Transverse colon (tissue), 4 donors: ENCODE measurements at regions of chr9 and their contacts with region 1.

Region 1: DNA sequence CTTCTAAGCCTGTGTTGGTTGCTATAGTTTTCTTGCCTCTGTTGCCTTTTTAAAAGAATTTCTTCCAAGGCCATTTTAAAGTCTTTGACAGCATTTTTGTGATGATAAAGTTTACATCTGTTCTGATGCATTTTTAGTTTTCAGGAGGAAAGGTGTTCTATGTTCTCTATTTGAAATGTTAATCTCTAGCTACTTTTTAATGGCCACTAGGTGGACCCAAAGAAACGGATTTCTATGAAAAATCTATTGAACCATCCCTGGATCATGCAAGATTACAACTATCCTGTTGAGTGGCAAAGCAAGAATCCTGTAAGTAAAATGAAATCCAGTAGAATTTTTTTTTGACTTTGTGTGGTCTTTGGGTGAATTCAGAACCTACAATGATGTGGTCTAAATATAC is 60.2 kb downstream of the MELK start:
- DNase-seq: no peak
- H3K4me3 ChIP-seq: no peak overlapping the region
- H3K27ac ChIP-seq: no peak overlapping the region
- H3K4me1 ChIP-seq: no peaks in the 10 kb centered on the region
- H3K27me3 ChIP-seq: no peaks in the 10 kb centered on the region
- CTCF ChIP-seq: peak; percentile 52 to 56 (median 53)
- EP300 ChIP-seq: no peak
- POLR2A ChIP-seq: no peak

Region 2: GRCh38 chr9:36008774-36009300 is 624.1 kb before region 1 on chr9:
- in situ Hi-C with region 1: no loop called
- intact Hi-C with region 1: no loop called
- DNase-seq: peak; percentile 74
- H3K4me3 ChIP-seq: no peak overlapping the region
- H3K27ac ChIP-seq: no peak overlapping the region
- H3K4me1 ChIP-seq: peaks cover 4 to 26% (median 11%) of the 10 kb centered on the region in 4 donors
- H3K27me3 ChIP-seq: no peaks in the 10 kb centered on the region
- CTCF ChIP-seq: peak; percentile 98 to 100 (median 99)
- EP300 ChIP-seq: no peak
- POLR2A ChIP-seq: no peak

Region 3: GRCh38 chr9:36728651-36729520 is 96.0 kb after region 1 on chr9:
- in situ Hi-C with region 1: loop called in 3 of 4 experiments (anchors 5 to 10 kb)
- intact Hi-C with region 1: no loop called
- DNase-seq: peak; percentile 84
- H3K4me3 ChIP-seq: no peak overlapping the region
- H3K27ac ChIP-seq: no peak overlapping the region
- H3K4me1 ChIP-seq: no peaks in the 10 kb centered on the region
- H3K27me3 ChIP-seq: no peaks in the 10 kb centered on the region
- CTCF ChIP-seq: peak; percentile 57 to 79 (median 70)
- EP300 ChIP-seq: no peak
- POLR2A ChIP-seq: no peak

Region 4: GRCh38 chr9:36738318-36738976 is 105.6 kb after region 1 on chr9:
- in situ Hi-C with region 1: loop called in 3 of 4 experiments (anchors 5 to 10 kb)
- intact Hi-C with region 1: no loop called
- DNase-seq: no peak
- H3K4me3 ChIP-seq: no peak overlapping the region
- H3K27ac ChIP-seq: no peak overlapping the region
- H3K4me1 ChIP-seq: peaks cover 0 to 6% (median 0%) of the 10 kb centered on the region in 4 donors
- H3K27me3 ChIP-seq: peaks cover 71% of the 10 kb centered on the region
- CTCF ChIP-seq: no peak
- EP300 ChIP-seq: no peak
- POLR2A ChIP-seq: no peak

Region 5: DNA sequence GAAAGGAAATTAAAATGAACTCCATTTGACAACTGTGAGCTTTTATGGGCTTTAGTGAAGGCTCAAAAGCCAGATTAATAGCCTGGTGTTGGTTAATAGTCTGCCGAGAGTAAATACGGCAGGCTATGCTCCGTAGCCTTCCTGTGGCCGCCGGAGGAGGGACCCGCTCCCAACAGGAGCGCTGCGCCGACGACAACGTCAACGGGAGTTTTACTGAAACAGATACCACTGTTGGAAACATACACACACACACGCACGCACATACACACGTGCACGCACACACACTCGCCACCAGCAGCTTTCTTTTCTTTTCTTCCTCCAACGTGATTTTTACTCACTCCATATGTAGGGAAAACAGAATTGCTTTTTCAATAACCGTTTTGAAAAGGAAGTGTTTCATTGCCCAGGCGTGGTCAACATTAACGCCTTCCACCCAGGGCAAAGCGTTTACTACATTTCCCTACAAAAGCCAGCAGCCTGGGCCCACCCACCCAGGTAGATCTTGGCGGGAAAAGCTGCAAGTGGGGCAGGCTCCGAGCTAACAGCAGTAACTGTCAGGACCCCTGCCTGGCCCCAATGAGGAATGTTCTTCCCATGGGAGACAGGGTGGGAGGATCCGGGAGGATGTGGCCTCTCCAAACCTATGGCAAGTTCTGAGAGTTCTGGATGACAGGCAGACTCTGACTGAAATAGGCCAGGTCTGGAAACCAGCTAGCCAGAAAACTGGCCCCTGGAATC is 328.8 kb after region 1 on chr9:
- in situ Hi-C with region 1: no loop called
- intact Hi-C with region 1: no loop called
- DNase-seq: no peak
- H3K4me3 ChIP-seq: peak overlapping the region in 2 of 4 donors; percentile 1 to 24
- H3K27ac ChIP-seq: no peak overlapping the region
- H3K4me1 ChIP-seq: peaks cover 0 to 7% (median 3%) of the 10 kb centered on the region in 4 donors
- H3K27me3 ChIP-seq: peaks cover 23% of the 10 kb centered on the region
- CTCF ChIP-seq: no peak
- EP300 ChIP-seq: no peak
- POLR2A ChIP-seq: no peak